Left colon (tissue), 2 donors: ENCODE measurements at regions of chr6 and their contacts with region 1.

Region 1: GRCh38 chr6:56115715-56116114 is 131.7 kb downstream of the COL21A1 start:
- DNase-seq: no peak
- ATAC-seq: no peak

Region 2: DNA sequence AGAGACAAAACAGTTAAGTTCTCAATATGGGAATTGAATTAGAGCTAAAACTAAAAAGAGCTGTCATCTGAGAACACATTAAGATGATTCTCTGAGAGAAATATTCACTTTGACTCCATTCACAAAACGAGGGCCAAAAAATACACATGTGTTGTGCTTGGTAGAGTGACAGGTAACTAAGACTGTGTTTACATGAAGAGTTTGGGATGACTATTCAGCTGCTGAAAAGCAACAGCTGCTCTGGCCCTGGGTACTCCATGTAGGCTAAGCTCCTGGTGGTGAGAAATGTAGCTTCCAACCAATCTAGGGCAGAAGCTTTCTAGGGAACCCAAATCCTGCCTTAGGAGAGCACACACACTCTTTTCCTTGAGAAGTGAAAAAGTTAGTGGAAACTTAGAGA is 52.9 kb before region 1 on chr6:
- intact Hi-C with region 1: no loop called
- DNase-seq: no peak
- ATAC-seq: no peak

Region 3: DNA sequence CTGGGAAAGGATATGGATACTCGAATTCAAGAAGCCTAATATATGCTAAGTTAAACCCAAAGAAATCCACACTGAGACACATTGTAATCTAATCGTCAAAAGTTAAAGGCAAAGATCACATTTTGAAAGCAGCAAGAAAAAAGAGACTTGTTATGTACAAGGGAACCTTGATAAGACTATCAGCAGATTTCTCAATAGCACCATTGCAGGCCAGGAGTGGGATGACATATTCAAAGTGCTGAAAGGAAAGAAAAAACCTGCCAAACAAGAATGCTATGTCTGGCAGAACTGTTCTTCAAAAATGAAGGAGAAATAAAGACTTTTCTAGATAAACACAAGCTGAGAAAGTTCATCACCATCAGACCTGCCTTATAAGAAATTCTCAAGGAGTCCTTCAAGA is 56.4 kb after region 1 on chr6:
- intact Hi-C with region 1: loop called in 1 of 2 experiments (anchors 2 kb)
- DNase-seq: no peak
- ATAC-seq: no peak

Region 4: DNA sequence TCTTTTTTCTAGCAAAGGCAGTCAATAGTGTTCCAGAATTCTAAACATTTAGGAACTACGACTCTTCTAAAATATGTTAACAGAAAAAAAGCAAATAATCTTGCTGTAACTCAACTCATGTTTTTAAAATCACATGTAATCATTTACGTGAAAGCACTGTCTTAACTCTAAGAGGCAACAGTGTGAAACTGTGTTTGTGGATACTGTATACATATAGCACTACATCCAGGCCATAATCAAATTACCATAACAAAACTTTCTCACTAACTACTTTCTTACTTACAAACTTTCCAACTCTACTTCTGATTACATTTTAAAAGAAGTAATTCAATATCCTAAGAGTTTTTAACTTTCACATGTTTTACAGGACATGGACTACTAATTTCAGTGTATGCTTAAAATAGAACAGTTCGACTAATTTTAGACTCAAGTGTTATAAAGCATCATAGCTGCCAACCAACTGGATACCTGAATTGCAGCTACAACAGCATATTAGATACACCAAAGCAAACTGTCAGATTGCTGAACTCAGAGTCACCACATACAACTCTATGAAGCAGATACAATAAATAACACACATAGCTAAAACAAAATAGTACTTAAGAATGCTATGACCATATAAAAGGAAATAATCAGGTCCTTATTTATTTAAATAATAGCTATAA is 717.5 kb after region 1 on chr6:
- intact Hi-C with region 1: no loop called
- DNase-seq: no peak
- ATAC-seq: no peak